ENCODE measurements at regions of chr13 and their contacts with region 1.

Region 1: GRCh38 chr13:37510441-37510840 is 88.1 kb downstream of the POSTN start:
- DNase-seq: no peak
- ATAC-seq: no peak
- H3K4me3 ChIP-seq: no peak overlapping the region
- H3K27ac ChIP-seq: no peak overlapping the region
- H3K4me1 ChIP-seq: no peaks in the 10 kb centered on the region
- H3K27me3 ChIP-seq: no peaks in the 10 kb centered on the region
- CTCF ChIP-seq: no peak

Region 2: GRCh38 chr13:37412241-37412921 is 98.1 kb before region 1 on chr13:
- intact Hi-C with region 1: no loop called
- DNase-seq: no peak
- ATAC-seq: no peak
- H3K4me3 ChIP-seq: no peak overlapping the region
- H3K27ac ChIP-seq: no peak overlapping the region
- H3K4me1 ChIP-seq: no peaks in the 10 kb centered on the region
- H3K27me3 ChIP-seq: no peaks in the 10 kb centered on the region
- CTCF ChIP-seq: no peak

Region 3: DNA sequence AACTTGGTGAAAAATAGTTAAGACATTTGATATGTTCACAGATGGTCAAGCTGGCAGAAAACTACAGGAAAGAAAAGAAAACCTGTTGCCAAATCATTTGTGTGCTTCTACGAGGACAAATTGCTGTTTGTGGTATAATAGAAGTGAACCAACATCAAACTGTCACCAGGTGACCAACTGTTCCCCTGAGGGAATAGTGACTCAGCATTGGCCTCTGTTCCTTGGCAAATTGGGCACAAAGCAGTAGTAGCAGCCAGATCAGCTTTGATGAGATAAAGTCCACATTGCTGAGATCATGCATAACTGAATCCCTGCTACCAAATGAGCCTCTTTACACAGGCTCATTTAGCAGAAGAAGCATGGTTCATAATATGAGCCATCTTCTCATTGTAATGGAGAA is 15.4 kb before region 1 on chr13:
- intact Hi-C with region 1: loop called in 1 of 2 experiments (anchors 1 kb)
- DNase-seq: no peak
- ATAC-seq: peak in 1 of 4 donors; percentile 57
- H3K4me3 ChIP-seq: no peak overlapping the region
- H3K27ac ChIP-seq: no peak overlapping the region
- H3K4me1 ChIP-seq: no peaks in the 10 kb centered on the region
- H3K27me3 ChIP-seq: no peaks in the 10 kb centered on the region
- CTCF ChIP-seq: no peak

Measured in psoas muscle (tissue), 8 donors.